CD4-positive, alpha-beta T cell (primary cell): ENCODE measurements at regions of chr7 and their contacts with region 1.

Region 1: DNA sequence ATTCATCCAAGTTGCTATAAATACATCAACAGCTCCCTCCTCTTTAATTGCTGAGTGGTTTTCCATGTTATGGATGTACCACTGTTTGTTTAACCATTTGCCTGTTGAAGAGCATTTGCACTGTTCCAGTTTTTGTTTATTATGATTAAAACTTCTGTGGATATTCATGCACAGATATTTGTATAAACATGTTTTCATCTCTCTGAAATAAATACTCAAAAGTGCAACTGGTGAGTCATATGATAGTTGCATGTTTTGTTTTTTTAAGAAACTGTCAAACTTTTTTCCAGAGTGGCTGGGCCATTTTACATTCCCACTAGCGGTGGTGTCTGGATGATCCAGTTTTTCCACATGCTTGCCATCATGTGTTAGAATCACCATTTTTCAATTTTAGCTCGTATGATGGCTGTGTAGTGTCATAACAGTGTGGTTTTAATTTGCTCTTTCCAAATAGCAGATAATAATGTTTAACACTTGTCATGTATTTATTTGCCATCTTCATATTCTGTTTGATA is 33.6 kb downstream of the MEOX2 start:
- DNase-seq: no peak
- ATAC-seq: no peak
- H3K4me3 ChIP-seq: no peak overlapping the region
- H3K4me3 Mint-ChIP-seq: no peak overlapping the region
- H3K27ac ChIP-seq: no peak overlapping the region
- H3K27ac Mint-ChIP-seq: no peak overlapping the region
- H3K4me1 ChIP-seq: no peaks in the 10 kb centered on the region
- H3K4me1 Mint-ChIP-seq: no peaks in the 10 kb centered on the region
- H3K27me3 ChIP-seq: no peaks in the 10 kb centered on the region
- H3K27me3 Mint-ChIP-seq: no peaks in the 10 kb centered on the region
- CTCF ChIP-seq: no peak

Region 2: GRCh38 chr7:15593382-15593781 is 59.5 kb before region 1 on chr7:
- CTCF ChIA-PET with region 1: no interaction called
- POLR2A ChIA-PET with region 1: no interaction called
- intact Hi-C with region 1: loop called in 1 of 2 experiments (anchors 5 kb)
- DNase-seq: no peak
- ATAC-seq: no peak
- H3K4me3 ChIP-seq: no peak overlapping the region
- H3K4me3 Mint-ChIP-seq: no peak overlapping the region
- H3K27ac ChIP-seq: no peak overlapping the region
- H3K27ac Mint-ChIP-seq: no peak overlapping the region
- H3K4me1 ChIP-seq: no peaks in the 10 kb centered on the region
- H3K4me1 Mint-ChIP-seq: no peaks in the 10 kb centered on the region
- H3K27me3 ChIP-seq: no peaks in the 10 kb centered on the region
- H3K27me3 Mint-ChIP-seq: no peaks in the 10 kb centered on the region
- CTCF ChIP-seq: no peak